Naive thymus-derived CD8-positive, alpha-beta T cell (primary cell): ENCODE measurements at regions of chr16 and their contacts with region 1.

Region 1: DNA sequence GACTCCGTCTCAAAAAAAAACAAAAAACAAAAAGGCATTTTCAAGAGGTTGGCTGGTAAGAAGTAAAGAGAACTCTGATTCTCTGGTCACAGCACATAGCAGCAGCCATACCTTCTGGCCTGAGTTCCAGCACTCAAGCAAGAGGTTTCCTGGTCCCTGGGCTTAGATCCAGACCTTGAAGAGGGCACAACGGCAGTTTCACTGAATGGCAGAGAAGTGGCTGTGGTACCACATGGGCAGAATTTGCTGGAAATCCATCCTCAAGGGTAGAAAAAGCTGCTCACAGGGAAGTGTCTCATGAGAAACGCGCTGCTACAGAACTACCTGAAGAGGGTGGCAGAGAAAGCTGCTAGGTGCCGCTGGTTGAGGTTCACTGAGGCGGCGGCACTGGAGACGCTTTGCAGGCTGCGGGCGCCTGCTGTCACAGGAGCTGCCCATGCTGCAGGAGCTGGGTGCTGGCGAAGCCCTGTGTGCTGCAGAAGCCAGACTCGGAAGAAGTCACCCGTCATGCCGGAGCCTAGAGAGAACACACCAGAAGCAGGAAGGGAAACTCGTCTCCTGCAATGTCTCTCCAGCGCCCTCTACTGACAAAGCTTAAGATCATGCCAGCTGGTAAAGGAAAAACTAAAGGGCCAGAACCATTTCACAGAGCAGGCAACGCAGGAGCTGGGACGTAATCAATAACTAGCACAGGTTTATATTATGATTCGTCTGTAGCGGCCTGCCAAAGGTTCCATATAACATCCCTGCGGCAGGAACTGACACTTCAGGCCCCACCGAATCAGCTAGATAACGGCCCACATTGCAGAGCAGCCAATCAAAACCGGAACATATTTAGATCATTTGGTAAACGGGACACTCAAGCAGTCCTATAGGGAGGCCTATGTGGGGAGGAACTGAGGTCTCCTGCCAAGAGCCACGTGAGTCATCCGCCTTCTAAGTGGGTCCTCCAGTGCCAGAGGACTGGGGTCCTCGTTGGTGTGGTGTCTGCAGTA is 5.4 kb upstream of the ZNF213 start:
- DNase-seq: peak; percentile 56 to 92 (median 82)
- ATAC-seq: peak; percentile 74
- H3K4me3 Mint-ChIP-seq: peak overlapping the region; percentile 90 to 96 (median 92)
- H3K27ac Mint-ChIP-seq: peak overlapping the region; percentile 76 to 95 (median 90)
- H3K4me1 Mint-ChIP-seq: peaks cover 27 to 66% (median 54%) of the 10 kb centered on the region in 4 donors
- H3K27me3 Mint-ChIP-seq: no peaks in the 10 kb centered on the region

Region 2: DNA sequence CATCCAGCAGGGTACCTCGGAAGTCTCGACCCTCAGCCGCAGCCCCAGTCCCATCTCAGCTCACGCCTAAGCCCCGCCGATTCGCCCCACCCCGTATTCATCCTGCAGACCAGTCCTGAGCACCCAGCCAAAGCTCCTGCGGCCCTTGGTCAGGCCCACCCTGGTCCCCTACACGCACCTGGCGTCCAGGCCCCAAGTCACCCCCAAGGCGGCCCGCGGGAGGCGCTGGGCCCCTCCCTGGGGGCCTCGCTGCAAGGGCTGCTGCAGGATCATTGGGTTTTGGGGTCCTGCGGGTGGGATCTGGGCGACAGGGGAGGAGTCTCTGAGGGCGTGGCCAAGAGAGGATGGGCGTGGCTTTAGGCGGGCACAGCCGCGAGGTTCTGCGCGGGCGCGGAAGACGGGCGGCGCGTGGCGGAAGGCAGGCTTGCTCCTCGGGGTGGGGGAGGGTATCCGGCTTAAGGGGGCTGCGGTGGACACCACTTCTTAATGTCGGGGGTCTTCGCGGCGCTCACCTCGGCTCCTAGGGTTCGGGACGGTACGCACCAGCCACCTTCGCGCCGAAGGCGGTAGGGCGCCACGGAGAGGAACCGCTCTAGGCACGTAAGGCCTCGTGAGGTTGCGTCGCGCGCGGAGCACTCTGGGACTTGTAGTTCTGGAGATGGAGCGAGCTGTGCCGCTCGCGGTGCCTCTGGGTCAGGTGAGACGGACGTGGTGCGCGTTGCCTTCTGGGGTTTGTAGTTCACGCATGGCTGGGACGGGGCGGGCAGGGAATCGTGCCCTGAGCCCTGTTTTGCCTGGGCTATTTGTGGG is 105.6 kb before region 1 on chr16 and contains the starts of genes HCFC1R1 and THOC6:
- POLR2A ChIA-PET with region 1: interaction called, 30 read pairs
- DNase-seq: peak; percentile 88 to 97 (median 94)
- ATAC-seq: peak; percentile 75 to 87
- H3K4me3 Mint-ChIP-seq: peak within 1 kb of the TSS; percentile 76 to 97 (median 92)
- H3K27ac Mint-ChIP-seq: peak within 1 kb of the TSS; percentile 81 to 99 (median 97)
- H3K4me1 Mint-ChIP-seq: peaks cover 25 to 63% (median 61%) of the 10 kb centered on the region in 4 donors
- H3K27me3 Mint-ChIP-seq: peaks cover 0 to 5% (median 2%) of the 10 kb centered on the region in 5 donors
- polyA plus RNA-seq, gene HCFC1R1: 13.1 to 16.5 (median 16.5) TPM
- polyA plus RNA-seq, gene THOC6: 45.2 to 59.0 (median 58.8) TPM

Region 3: DNA sequence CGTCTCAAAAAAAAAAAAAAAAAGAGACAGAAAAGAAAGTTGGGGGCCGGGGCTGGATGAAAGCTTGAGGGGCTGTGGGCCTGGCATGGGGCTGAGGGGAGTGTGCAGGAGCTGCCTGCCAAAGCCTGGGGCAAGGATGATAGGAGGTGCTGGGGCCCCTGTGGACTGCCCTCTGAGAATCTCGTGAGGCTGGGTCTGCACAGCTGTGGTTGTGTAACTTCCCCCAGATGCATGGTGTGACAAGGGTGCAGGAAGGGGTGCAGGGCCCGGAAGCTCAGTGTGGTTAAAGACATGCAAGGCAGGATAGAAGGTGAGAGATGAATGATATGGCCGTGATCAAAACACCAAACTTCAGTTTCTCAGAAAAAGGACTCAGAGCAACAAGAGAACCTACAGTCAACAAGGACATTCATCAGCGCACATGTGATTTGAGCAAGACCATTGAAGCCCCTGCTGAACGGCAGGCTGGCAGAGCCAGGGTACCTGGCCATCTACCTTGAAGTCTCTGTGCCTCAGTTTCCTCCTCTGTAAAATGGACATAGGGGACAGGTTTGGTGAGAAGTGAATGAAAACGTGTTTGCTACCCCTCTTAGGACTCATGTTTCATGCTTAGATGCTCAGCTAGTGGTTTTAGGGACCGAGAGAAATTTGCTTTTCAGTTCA is 54.4 kb before region 1 on chr16:
- POLR2A ChIA-PET with region 1: interaction called, 278 read pairs
- DNase-seq: peak; percentile 37 to 93 (median 82)
- ATAC-seq: peak; percentile 91 to 96
- H3K4me3 Mint-ChIP-seq: peak overlapping the region; percentile 58 to 89 (median 82)
- H3K27ac Mint-ChIP-seq: peak overlapping the region; percentile 92 to 100 (median 98)
- H3K4me1 Mint-ChIP-seq: peaks cover 53 to 89% (median 87%) of the 10 kb centered on the region in 4 donors
- H3K27me3 Mint-ChIP-seq: no peaks in the 10 kb centered on the region

Region 4: GRCh38 chr16:3094289-3095027 is 35.0 kb before region 1 on chr16:
- POLR2A ChIA-PET with region 1: interaction called, 34 read pairs
- DNase-seq: peak in 8 of 10 donors; percentile 47 to 75 (median 56)
- ATAC-seq: peak; percentile 45 to 50
- H3K4me3 Mint-ChIP-seq: peak overlapping the region in 5 of 10 donors; percentile 7 to 34 (median 13)
- H3K27ac Mint-ChIP-seq: peak overlapping the region in 9 of 10 donors; percentile 22 to 84 (median 66)
- H3K4me1 Mint-ChIP-seq: peaks cover 13 to 56% (median 34%) of the 10 kb centered on the region in 4 donors
- H3K27me3 Mint-ChIP-seq: no peaks in the 10 kb centered on the region

Region 5: GRCh38 chr16:3188925-3189825 is 59.7 kb after region 1 on chr16:
- POLR2A ChIA-PET with region 1: no interaction called
- DNase-seq: peak in 4 of 10 donors; percentile 27 to 43 (median 35)
- ATAC-seq: peak; percentile 41 to 46
- H3K4me3 Mint-ChIP-seq: peak overlapping the region; percentile 45 to 86 (median 76)
- H3K27ac Mint-ChIP-seq: peak overlapping the region; percentile 6 to 81 (median 46)
- H3K4me1 Mint-ChIP-seq: peaks cover 20 to 46% (median 36%) of the 10 kb centered on the region in 4 donors
- H3K27me3 Mint-ChIP-seq: peaks cover 31 to 81% (median 59%) of the 10 kb centered on the region in 5 donors